ENCODE measurements at regions of chr4 and their contacts with region 1.

Region 1: GRCh38 chr4:47914220-47914925 is at the start of gene NFXL1:
- DNase-seq: peak; percentile 97 to 98
- ATAC-seq: peak; percentile 99 to 100 (median 100)
- H3K4me3 ChIP-seq: peak within 1 kb of the TSS; percentile 82 to 99 (median 94)
- H3K27ac ChIP-seq: peak within 1 kb of the TSS in 9 of 10 donors; percentile 70 to 88 (median 82)
- H3K4me1 ChIP-seq: peaks cover 4 to 23% (median 12%) of the 10 kb centered on the region in 9 donors
- H3K27me3 ChIP-seq: no peaks in the 10 kb centered on the region
- CTCF ChIP-seq: no peak
- total RNA-seq, gene NFXL1: 3.4 to 6.3 (median 5.1) TPM

Region 2: GRCh38 chr4:47490550-47490949 is 423.8 kb before region 1 on chr4:
- intact Hi-C with region 1: loop called in 1 of 10 experiments (anchors 10 kb)
- DNase-seq: peak in 1 of 2 donors; percentile 13
- ATAC-seq: peak; percentile 43 to 81 (median 72)
- H3K4me3 ChIP-seq: no peak overlapping the region
- H3K27ac ChIP-seq: no peak overlapping the region
- H3K4me1 ChIP-seq: peaks cover 0 to 58% (median 30%) of the 10 kb centered on the region in 9 donors
- H3K27me3 ChIP-seq: no peaks in the 10 kb centered on the region
- CTCF ChIP-seq: peak in 7 of 9 donors; percentile 44 to 63 (median 48)

Region 3: GRCh38 chr4:47668810-47669408 is 245.5 kb before region 1 on chr4:
- intact Hi-C with region 1: no loop called
- DNase-seq: peak in 1 of 2 donors; percentile 32
- ATAC-seq: peak in 6 of 8 donors; percentile 61 to 71 (median 68)
- H3K4me3 ChIP-seq: no peak overlapping the region
- H3K27ac ChIP-seq: no peak overlapping the region
- H3K4me1 ChIP-seq: no peaks in the 10 kb centered on the region
- H3K27me3 ChIP-seq: no peaks in the 10 kb centered on the region
- CTCF ChIP-seq: peak; percentile 57 to 76 (median 70)

Region 4: GRCh38 chr4:47862297-47862696 is 52.1 kb before region 1 on chr4:
- intact Hi-C with region 1: loop called in 1 of 10 experiments (anchors 5 kb)
- DNase-seq: no peak
- ATAC-seq: no peak
- H3K4me3 ChIP-seq: no peak overlapping the region
- H3K27ac ChIP-seq: no peak overlapping the region
- H3K4me1 ChIP-seq: no peaks in the 10 kb centered on the region
- H3K27me3 ChIP-seq: no peaks in the 10 kb centered on the region
- CTCF ChIP-seq: no peak

Region 5: DNA sequence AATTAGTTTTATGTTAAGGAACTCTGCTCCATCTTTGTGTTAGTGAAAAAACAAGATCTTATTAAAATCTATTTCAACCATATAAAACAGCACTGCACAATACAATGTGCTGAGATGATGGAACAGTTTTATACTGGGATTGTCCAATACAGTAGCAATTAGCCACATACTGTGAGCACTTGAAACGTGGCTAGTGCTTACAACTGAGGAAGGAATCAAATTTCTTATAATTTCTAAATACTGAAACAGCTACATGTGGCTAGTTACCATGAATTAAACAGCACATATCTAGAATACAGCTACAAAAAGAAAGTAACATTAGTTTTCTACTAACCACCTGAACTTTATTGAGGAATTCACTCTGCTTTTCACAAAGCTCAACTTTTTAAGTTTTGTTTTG is 14.7 kb before region 1 on chr4:
- intact Hi-C with region 1: no loop called
- DNase-seq: no peak
- ATAC-seq: no peak
- H3K4me3 ChIP-seq: no peak overlapping the region
- H3K27ac ChIP-seq: no peak overlapping the region
- H3K4me1 ChIP-seq: no peaks in the 10 kb centered on the region
- H3K27me3 ChIP-seq: no peaks in the 10 kb centered on the region
- CTCF ChIP-seq: no peak

Region 6: DNA sequence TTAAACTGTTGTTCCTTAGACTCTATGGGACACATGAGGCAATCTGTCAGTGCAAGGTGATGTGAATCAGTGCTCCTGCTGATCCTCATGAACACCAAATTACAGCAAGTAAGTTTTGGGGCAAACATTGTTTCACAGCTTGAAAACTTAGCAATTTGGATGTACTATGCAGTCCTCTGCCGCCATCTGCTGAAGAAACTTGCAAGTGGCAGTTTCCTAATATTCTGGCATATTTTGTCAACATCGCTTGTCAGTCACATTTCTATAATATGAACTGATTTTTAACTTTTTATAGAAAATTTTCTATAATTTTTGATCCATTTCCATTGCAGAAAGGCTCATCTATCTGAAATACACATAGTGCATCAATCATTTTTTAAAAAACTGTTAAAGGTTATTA is 632.0 kb after region 1 on chr4:
- intact Hi-C with region 1: no loop called
- DNase-seq: no peak
- ATAC-seq: no peak
- H3K4me3 ChIP-seq: no peak overlapping the region
- H3K27ac ChIP-seq: no peak overlapping the region
- H3K4me1 ChIP-seq: no peaks in the 10 kb centered on the region
- H3K27me3 ChIP-seq: no peaks in the 10 kb centered on the region
- CTCF ChIP-seq: peak; percentile 8 to 72 (median 56)